Sigmoid colon (tissue), 7 donors: ENCODE measurements at regions of chr19 and their contacts with region 1.

Region 1: GRCh38 chr19:35495107-35496064 is 5.1 kb upstream of the KRTDAP start:
- DNase-seq: peak; percentile 83
- H3K4me3 ChIP-seq: no peak overlapping the region
- H3K27ac ChIP-seq: no peak overlapping the region
- H3K4me1 ChIP-seq: peaks cover 0 to 7% (median 3%) of the 10 kb centered on the region in 4 donors
- H3K27me3 ChIP-seq: peaks cover 0 to 2% (median 0%) of the 10 kb centered on the region in 3 donors
- CTCF ChIP-seq: peak; percentile 82 to 99 (median 90)
- EP300 ChIP-seq: no peak
- POLR2A ChIP-seq: no peak

Region 2: DNA sequence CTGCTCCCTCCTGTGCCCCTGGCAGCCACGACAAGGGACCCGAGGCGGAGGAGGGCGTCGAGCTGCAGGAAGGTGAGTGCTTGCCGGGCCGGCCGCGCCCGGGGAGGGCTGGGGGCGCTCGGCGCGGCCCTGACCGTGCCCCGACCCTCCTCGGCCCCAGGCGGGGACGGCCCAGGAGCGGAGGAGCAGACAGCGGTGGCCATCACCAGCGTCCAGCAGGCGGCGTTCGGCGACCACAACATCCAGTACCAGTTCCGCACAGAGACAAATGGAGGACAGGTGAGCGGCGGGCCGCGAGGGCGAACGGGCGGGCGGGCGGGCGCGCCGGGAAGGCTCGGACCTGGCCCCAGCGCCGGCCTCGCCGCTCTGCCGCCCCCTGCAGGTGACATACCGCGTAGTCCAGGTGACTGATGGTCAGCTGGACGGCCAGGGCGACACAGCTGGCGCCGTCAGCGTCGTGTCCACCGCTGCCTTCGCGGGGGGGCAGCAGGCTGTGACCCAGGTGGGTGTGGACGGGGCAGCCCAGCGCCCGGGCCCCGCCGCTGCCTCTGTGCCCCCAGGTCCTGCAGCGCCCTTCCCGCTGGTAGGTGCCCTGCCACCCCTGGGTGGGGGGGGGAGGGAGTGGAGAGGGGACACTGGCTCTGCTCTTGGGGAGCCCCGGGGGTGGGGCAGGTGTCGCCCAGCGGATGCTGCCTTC is 225.8 kb before region 1 on chr19:
- intact Hi-C with region 1: loop called (anchors 1 kb)
- DNase-seq: peak; percentile 92
- H3K4me3 ChIP-seq: peak overlapping the region; percentile 51 to 75 (median 70)
- H3K27ac ChIP-seq: peak overlapping the region; percentile 91 to 95 (median 92)
- H3K4me1 ChIP-seq: peaks cover 0 to 40% (median 28%) of the 10 kb centered on the region in 4 donors
- H3K27me3 ChIP-seq: no peaks in the 10 kb centered on the region
- CTCF ChIP-seq: peak in 2 of 4 experiments; percentile 23 to 78
- EP300 ChIP-seq: no peak
- POLR2A ChIP-seq: no peak

Region 3: GRCh38 chr19:35352448-35353304 is 142.7 kb before region 1 on chr19:
- intact Hi-C with region 1: loop called (anchors 1 kb)
- DNase-seq: peak; percentile 81
- H3K4me3 ChIP-seq: no peak overlapping the region
- H3K27ac ChIP-seq: no peak overlapping the region
- H3K4me1 ChIP-seq: peaks cover 0 to under 1% (median 0%) of the 10 kb centered on the region in 4 donors
- H3K27me3 ChIP-seq: peaks cover 0 to 7% (median 0%) of the 10 kb centered on the region in 3 donors
- CTCF ChIP-seq: peak; percentile 21 to 65 (median 63)
- EP300 ChIP-seq: no peak
- POLR2A ChIP-seq: no peak

Region 4: GRCh38 chr19:35363001-35363590 is 132.3 kb before region 1 on chr19:
- intact Hi-C with region 1: no loop called
- DNase-seq: no peak
- H3K4me3 ChIP-seq: no peak overlapping the region
- H3K27ac ChIP-seq: no peak overlapping the region
- H3K4me1 ChIP-seq: peaks cover 0 to 2% (median 0%) of the 10 kb centered on the region in 4 donors
- H3K27me3 ChIP-seq: no peaks in the 10 kb centered on the region
- CTCF ChIP-seq: no peak
- EP300 ChIP-seq: no peak
- POLR2A ChIP-seq: no peak